Posterior cingulate gyrus (tissue), 11 donors: ENCODE measurements at regions of chr4 and their contacts with region 1.

Region 1: DNA sequence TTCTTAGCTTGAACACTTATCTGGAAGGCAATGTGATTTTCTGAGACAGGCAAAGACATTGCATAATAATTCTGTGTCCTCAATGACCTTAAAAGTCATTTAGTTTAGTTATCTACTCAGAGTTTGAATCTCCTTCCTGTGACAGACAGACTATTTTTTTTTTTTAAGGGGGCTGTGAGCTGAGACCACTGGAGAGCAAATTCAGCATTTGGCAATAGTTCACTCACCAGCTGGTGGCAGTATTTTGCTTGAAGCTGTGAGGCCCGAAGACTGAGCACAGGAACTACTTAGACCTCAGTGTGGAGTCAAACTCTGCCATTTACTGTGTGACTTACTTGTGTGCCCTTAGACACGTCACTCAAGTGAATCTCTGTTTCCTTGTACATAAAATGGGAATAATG is 22.9 kb upstream of the CPE start:
- DNase-seq: peak in 5 of 10 donors; percentile 30 to 91 (median 41)

Region 2: GRCh38 chr4:164753872-164754488 is 601.9 kb before region 1 on chr4 and contains the start of gene SMIM31:
- intact Hi-C with region 1: no loop called
- DNase-seq: no peak

Region 3: DNA sequence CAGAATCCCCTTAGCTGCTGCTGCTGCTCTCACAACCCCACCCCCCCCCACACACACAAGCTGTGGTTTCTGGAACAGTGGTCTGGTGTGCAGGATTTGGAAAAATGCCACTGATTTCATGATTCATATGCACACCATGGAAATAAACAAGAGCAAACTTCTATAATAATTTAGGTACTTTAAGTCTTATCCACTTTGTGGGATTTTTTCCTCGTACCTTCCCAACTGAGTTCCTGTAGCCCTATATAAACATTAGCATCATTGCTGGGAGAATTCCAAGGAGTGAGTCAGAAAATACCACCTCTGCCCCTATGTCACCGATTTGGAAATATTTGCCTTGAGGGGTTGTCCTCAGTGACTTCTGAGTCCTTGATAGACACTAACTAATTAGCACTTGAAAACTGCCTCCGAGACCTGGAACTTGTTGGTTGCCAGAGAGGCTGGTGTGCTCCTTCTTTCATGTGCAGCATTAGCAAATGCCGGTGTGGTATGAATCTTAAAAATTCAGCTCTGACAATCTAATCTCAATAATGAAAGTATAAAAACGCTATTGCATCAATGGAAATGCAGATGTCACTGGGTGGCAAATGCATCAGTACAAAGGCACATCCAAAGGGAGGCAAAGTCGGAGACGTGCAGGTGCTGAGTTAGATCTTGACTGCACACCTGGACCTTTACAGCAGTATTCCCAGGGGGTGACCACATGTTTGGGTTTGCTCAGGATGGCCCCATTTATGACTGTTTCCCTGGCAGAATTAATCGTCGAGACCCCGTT is 84.7 kb after region 1 on chr4:
- intact Hi-C with region 1: no loop called
- DNase-seq: no peak

Region 4: DNA sequence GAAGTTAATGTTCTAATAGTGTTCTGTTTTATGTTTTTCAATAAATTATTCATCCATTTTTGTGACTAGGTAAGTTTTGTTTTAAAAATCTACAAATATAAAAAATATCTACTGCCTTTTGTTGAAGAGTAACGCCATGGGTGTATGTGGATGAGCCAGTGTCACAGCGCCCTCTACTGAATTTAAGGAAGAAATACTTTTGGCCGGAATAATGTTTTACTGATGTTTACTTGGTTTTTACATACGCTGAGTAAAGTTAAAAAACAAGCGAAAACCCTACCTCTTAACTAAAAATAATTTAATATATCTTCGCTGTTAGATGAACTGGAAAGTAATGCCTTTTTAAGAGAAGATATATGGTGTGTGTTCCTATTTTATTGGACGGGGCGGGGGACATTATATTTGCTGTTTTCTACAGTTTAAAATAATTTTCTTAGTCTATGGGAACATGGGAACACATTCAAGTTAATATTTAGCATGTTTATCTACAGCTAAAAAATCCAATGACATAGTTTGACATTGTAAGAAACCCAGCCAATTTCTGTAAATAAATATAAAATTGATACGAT is 109.0 kb after region 1 on chr4:
- intact Hi-C with region 1: loop called (anchors 2 kb)
- DNase-seq: no peak